Tibial artery (tissue), 4 donors: ENCODE measurements at regions of chr2 and their contacts with region 1.

Region 1: GRCh38 chr2:27798948-27799645 is 27.6 kb downstream of the MRPL33 start:
- DNase-seq: peak; percentile 58 to 85
- H3K4me3 ChIP-seq: no peak overlapping the region
- H3K27ac ChIP-seq: peak overlapping the region; percentile 84 to 85
- H3K4me1 ChIP-seq: peaks cover 4 to 68% (median 52%) of the 10 kb centered on the region in 4 donors
- H3K27me3 ChIP-seq: no peaks in the 10 kb centered on the region
- CTCF ChIP-seq: no peak

Region 2: GRCh38 chr2:27723372-27724144 is 75.5 kb before region 1 on chr2:
- intact Hi-C with region 1: loop called (anchors 10 kb)
- DNase-seq: peak; percentile 70 to 90
- H3K4me3 ChIP-seq: no peak overlapping the region
- H3K27ac ChIP-seq: peak overlapping the region; percentile 86 to 94
- H3K4me1 ChIP-seq: peaks cover 0 to 77% (median 33%) of the 10 kb centered on the region in 4 donors
- H3K27me3 ChIP-seq: no peaks in the 10 kb centered on the region
- CTCF ChIP-seq: peak; percentile 88 to 90

Region 3: DNA sequence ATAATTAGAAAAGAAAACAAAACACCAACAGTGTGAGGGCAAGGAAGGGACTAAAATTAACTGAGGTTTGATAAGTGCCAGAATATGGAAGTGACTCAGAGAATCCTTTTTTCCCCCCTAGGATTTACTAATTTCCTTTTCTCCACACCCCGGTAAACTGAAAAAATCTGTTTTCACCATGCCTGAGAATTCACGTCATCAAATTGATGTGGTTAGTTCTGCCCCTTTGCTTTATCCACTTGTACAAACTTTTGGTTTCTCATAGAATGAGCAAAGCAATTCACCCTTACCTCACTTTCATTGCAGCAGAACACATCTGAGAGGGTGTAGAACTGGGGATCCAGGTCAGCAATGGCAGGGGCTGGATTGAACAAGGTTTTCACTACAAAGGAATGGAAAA is 33.3 kb after region 1 on chr2:
- intact Hi-C with region 1: no loop called
- DNase-seq: no peak
- H3K4me3 ChIP-seq: no peak overlapping the region
- H3K27ac ChIP-seq: no peak overlapping the region
- H3K4me1 ChIP-seq: no peaks in the 10 kb centered on the region
- H3K27me3 ChIP-seq: no peaks in the 10 kb centered on the region
- CTCF ChIP-seq: no peak

Region 4: GRCh38 chr2:28068088-28068487 is 269.0 kb after region 1 on chr2:
- intact Hi-C with region 1: no loop called
- DNase-seq: no peak
- H3K4me3 ChIP-seq: no peak overlapping the region
- H3K27ac ChIP-seq: no peak overlapping the region
- H3K4me1 ChIP-seq: no peaks in the 10 kb centered on the region
- H3K27me3 ChIP-seq: no peaks in the 10 kb centered on the region
- CTCF ChIP-seq: no peak